Right ventricle myocardium inferior (tissue), 1 donor: ENCODE measurements at regions of chr9 and their contacts with region 1.

Region 1: GRCh38 chr9:73565833-73566465 is 414.3 kb downstream of the ANXA1 start:
- DNase-seq: no peak
- ATAC-seq: no peak

Region 2: GRCh38 chr9:73200694-73201452 is 365.1 kb before region 1 on chr9:
- intact Hi-C with region 1: loop called (anchors 5 kb)
- DNase-seq: no peak
- ATAC-seq: no peak

Region 3: GRCh38 chr9:73269430-73270101 is 296.4 kb before region 1 on chr9:
- intact Hi-C with region 1: loop called (anchors 1 kb)
- DNase-seq: no peak
- ATAC-seq: no peak

Region 4: GRCh38 chr9:73845539-73845938 is 279.6 kb after region 1 on chr9:
- intact Hi-C with region 1: no loop called
- DNase-seq: no peak
- ATAC-seq: no peak

Region 5: DNA sequence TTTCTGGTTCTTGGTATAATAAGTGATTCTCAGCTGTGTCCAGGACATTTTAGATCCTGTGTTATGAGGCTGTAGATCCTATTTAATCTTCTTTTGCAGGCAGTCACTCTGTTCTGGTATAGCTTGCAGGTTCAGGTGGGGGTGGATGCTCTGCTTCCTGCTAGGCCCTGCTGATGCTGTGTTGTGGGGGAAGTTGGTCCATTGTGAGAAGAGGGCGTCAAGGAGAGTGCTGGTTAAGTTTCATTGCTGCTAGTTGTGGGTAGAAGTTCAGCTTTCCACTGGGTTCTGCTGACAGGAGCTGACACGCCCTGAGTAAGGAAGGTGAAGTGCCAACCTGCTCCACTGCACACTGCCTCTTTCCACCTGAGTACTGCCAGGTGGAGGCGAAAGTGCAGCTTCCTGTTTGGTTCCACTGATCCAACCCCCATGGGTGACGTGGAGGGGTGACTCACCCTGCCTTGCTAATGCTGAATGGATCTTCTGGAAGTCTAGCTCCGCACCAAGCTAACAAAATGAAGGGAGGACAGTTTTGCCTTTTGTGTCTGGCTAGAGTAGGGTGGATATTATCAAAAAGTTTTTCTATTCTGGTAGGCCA is 1505.7 kb after region 1 on chr9:
- intact Hi-C with region 1: no loop called
- DNase-seq: no peak
- ATAC-seq: no peak